Endothelial cell of umbilical vein (primary cell): ENCODE measurements at regions of chr17 and their contacts with region 1.

Region 1: GRCh38 chr17:62739645-62740388 is 68.3 kb downstream of the MARCHF10 start:
- DNase-seq: no peak
- H3K4me3 ChIP-seq: no peak overlapping the region
- H3K27ac ChIP-seq: no peak overlapping the region
- H3K4me1 ChIP-seq: no peaks in the 10 kb centered on the region
- H3K27me3 ChIP-seq: peaks cover 2% of the 10 kb centered on the region in 2 experiments
- CTCF ChIP-seq: no peak
- POLR2A ChIP-seq: no peak

Region 2: DNA sequence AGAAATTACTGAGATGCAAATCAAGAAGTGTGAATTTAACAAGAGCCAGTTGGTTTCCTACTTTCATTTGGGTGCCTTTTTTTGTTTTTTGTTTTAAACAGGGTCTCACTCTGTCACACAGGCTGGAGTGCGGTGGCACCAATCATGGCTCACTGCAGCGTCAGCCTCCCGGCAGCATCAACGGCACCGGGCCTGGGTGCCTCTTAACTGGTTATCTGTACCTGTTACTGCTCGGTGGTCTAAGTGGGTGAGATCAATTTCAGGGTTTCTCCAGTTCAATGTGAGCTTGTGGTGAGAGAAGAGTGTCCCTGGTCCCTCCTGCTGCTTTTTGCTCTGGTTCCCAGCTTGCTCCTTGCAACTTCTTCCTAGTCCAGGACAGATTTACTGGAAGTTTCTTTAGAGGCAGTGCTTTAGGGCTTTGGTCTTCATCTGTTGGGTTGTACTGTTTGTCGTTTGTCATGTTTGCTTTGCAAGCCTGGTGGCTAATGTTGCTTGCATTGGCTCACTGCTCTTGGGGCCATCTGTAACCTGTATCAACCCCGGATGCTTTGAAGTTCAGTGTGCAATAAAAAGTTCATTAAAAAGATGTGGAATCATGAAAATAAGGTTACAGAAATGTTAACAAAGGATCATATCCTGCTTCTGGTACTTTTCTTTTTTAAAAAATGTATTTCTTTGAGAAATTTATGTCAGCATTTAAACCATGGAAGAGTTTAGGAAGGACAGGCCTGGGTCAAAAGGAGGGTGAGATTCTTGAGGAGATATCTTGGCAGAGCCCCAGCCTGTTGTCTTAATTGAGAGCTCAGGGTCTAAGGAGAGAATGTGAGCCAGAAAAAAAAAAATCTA is 29.9 kb before region 1 on chr17:
- CTCF ChIA-PET with region 1: no interaction called
- POLR2A ChIA-PET with region 1: interaction called, 12 read pairs
- dilution Hi-C with region 1: no loop called
- intact Hi-C with region 1: no loop called
- DNase-seq: no peak
- H3K4me3 ChIP-seq: no peak overlapping the region
- H3K27ac ChIP-seq: no peak overlapping the region
- H3K4me1 ChIP-seq: peaks cover 15% of the 10 kb centered on the region
- H3K27me3 ChIP-seq: peaks cover 4 to 21% of the 10 kb centered on the region in 2 experiments
- CTCF ChIP-seq: no peak
- POLR2A ChIP-seq: no peak